RWPE1 (cell line): ENCODE measurements at regions of chr20 and their contacts with region 1.

Region 1: DNA sequence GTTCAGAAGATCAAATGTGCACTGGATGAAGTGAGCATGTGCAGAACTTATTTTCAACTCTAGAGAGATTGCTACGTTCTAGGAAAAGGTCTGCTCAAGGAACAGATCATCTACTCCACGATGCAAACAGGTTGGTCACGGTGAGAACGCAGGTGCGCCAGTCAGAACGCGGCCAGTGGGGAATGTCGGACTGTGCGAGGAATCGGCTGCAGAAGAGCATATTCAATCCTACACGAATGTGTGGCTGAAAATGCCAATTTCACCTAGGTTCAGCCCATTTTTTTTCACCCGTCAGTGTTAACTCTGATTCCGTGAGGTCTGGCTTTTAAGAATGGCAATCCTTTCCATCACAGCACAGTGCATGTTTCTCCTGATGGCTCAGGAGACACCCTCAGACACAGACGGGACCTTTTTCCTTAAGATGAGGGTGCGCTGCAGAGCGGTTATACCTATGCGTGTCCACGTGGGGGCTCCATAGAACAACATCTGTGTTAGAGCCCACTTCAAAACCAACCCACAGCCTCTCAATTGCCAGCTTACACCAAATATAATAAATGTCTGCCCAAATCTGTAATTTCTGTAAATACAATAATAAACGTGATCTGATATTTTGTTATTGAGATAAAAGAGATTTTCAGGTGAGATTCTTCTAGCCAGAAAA is 250.4 kb downstream of the FOXA2 start:
- DNase-seq: peak; percentile 88
- H3K27ac ChIP-seq: no peak overlapping the region
- CTCF ChIP-seq: peak; percentile 94

Region 2: GRCh38 chr20:22684072-22684762 is 350.2 kb after region 1 on chr20:
- CTCF ChIA-PET with region 1: interaction called, 37 read pairs
- POLR2A ChIA-PET with region 1: no interaction called
- DNase-seq: peak; percentile 77
- H3K27ac ChIP-seq: no peak overlapping the region
- CTCF ChIP-seq: peak; percentile 94